Activated CD4-positive, alpha-beta memory T cell treated with anti-CD3 and anti-CD28 coated beads, Interleukin-2, amount 10 ng/mL, durations not matched to agents 7 days and 5 days (primary cell): ENCODE measurements at regions of chr9 and their contacts with region 1.

Region 1: GRCh38 chr9:131277910-131278701 is 1.8 kb upstream of the FAM78A start:
- DNase-seq: peak; percentile 82
- H3K4me3 Mint-ChIP-seq: peak overlapping the region; percentile 77
- H3K27ac Mint-ChIP-seq: peak overlapping the region; percentile 98
- H3K4me1 Mint-ChIP-seq: peaks cover 25% of the 10 kb centered on the region
- H3K27me3 Mint-ChIP-seq: peaks cover 16% of the 10 kb centered on the region

Region 2: DNA sequence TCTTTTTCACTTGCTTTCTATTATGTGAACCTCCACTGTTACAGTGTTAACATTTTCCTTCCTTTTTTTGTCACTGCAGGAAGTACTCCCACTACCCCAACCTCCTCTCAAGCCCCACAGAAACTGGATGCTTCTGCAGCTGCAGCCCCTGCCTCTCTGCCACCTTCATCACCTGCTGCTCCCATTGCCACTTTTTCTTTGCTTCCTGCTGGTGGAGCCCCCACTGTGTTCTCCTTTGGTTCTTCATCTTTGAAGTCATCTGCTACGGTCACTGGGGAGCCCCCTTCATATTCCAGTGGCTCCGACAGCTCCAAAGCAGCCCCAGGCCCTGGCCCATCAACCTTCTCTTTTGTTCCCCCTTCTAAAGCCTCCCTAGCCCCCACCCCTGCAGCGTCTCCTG is 133.9 kb before region 1 on chr9:
- CTCF ChIA-PET with region 1: no interaction called
- POLR2A ChIA-PET with region 1: no interaction called
- DNase-seq: no peak
- H3K4me3 Mint-ChIP-seq: no peak overlapping the region
- H3K27ac Mint-ChIP-seq: no peak overlapping the region
- H3K4me1 Mint-ChIP-seq: no peaks in the 10 kb centered on the region
- H3K27me3 Mint-ChIP-seq: no peaks in the 10 kb centered on the region

Region 3: GRCh38 chr9:131178382-131178781 is 99.7 kb before region 1 on chr9:
- CTCF ChIA-PET with region 1: interaction called, 12 read pairs
- POLR2A ChIA-PET with region 1: interaction called, 5 read pairs
- DNase-seq: peak; percentile 82
- H3K4me3 Mint-ChIP-seq: no peak overlapping the region
- H3K27ac Mint-ChIP-seq: no peak overlapping the region
- H3K4me1 Mint-ChIP-seq: peaks cover 5% of the 10 kb centered on the region
- H3K27me3 Mint-ChIP-seq: no peaks in the 10 kb centered on the region

Region 4: GRCh38 chr9:131237931-131238401 is 40.1 kb before region 1 on chr9:
- CTCF ChIA-PET with region 1: no interaction called
- POLR2A ChIA-PET with region 1: interaction called, 101 read pairs
- DNase-seq: peak; percentile 91
- H3K4me3 Mint-ChIP-seq: peak overlapping the region; percentile 59
- H3K27ac Mint-ChIP-seq: peak overlapping the region; percentile 95
- H3K4me1 Mint-ChIP-seq: peaks cover 49% of the 10 kb centered on the region
- H3K27me3 Mint-ChIP-seq: no peaks in the 10 kb centered on the region

Region 5: DNA sequence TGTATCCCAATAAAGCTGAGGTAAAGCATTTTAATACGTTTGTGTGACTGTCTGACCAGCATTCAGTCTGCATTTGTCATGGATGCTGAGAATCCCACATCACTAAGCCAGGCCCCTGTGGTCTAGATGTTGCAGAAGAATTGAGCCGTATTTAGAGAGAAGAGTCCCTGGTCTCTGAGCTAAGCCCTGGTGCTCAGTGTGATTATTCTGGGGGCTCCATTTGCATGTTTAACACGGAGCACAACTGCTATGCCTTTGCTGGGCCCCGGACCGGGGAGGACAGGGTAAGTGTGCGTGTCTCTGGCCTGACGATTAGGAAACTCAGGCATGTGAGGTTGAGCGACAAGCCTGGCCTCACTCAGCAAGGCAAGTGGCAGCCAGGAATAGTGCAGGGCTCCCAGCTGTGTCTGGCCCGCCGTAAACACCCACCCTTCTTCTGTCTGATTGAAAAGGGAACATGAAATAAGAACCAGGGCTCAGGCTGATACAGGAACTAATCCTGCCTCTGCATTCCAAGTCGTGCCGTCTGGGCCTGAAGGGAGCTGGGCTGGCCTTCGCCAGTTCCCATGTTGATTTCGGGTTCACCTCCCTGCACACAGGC is 24.1 kb before region 1 on chr9:
- CTCF ChIA-PET with region 1: interaction called, 189 read pairs
- POLR2A ChIA-PET with region 1: interaction called, 557 read pairs
- DNase-seq: no peak
- H3K4me3 Mint-ChIP-seq: no peak overlapping the region
- H3K27ac Mint-ChIP-seq: peak overlapping the region; percentile 98
- H3K4me1 Mint-ChIP-seq: peaks cover 68% of the 10 kb centered on the region
- H3K27me3 Mint-ChIP-seq: no peaks in the 10 kb centered on the region

Region 6: GRCh38 chr9:131299346-131299745 is 21.2 kb after region 1 on chr9:
- CTCF ChIA-PET with region 1: no interaction called
- POLR2A ChIA-PET with region 1: no interaction called
- DNase-seq: no peak
- H3K4me3 Mint-ChIP-seq: no peak overlapping the region
- H3K27ac Mint-ChIP-seq: no peak overlapping the region
- H3K4me1 Mint-ChIP-seq: no peaks in the 10 kb centered on the region
- H3K27me3 Mint-ChIP-seq: peaks cover 6% of the 10 kb centered on the region

Region 7: DNA sequence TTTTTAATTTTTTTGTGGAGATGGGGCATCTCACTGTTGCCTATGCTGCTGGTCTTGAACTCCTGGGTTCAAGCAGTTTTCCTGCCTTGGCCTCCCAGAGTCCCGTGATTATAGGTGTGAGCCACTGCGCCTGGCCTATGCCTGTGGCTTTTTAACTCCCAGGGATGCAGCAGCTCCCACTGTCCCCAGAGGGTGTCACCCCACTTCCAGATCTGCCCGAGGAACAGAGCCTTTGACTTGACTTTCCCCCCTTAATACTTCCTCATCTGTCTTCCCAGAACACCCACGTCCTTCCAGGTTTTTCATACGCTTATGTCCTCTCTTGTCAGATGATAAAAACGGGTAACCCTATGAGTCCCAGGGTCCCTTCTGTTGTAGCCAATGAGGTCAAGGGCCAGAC is 108.2 kb after region 1 on chr9:
- CTCF ChIA-PET with region 1: no interaction called
- POLR2A ChIA-PET with region 1: no interaction called
- DNase-seq: no peak
- H3K4me3 Mint-ChIP-seq: no peak overlapping the region
- H3K27ac Mint-ChIP-seq: no peak overlapping the region
- H3K4me1 Mint-ChIP-seq: peaks cover 6% of the 10 kb centered on the region
- H3K27me3 Mint-ChIP-seq: peaks cover 11% of the 10 kb centered on the region